PC-3 (cell line): ENCODE measurements at regions of chr3 and their contacts with region 1.

Region 1: DNA sequence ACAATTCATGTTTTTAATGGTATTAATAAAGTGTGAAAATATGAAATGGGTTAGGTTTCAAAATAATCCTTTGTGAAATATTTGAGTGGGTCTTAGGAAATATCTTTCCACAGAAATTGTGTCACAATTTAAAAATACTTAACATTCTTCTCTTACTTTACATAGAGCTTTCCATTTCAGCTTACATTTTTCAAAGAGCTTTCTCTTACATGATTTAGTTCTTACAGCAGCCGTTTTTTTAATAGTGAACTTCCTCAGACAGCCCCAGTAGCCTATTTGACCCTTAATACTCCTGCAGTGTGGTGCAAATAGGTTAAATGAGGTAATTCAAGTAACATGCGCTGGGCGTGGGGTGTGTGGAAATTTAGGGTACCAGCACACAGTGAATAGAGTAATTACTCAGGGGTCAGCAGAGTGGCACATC is 21.8 kb downstream of the P2RY12 start:
- DNase-seq: no peak
- ATAC-seq: no peak
- H3K4me3 ChIP-seq: no peak overlapping the region
- H3K27ac ChIP-seq: no peak overlapping the region
- H3K4me1 ChIP-seq: peaks cover 20% of the 10 kb centered on the region
- H3K27me3 ChIP-seq: no peaks in the 10 kb centered on the region
- CTCF ChIP-seq: no peak

Region 2: DNA sequence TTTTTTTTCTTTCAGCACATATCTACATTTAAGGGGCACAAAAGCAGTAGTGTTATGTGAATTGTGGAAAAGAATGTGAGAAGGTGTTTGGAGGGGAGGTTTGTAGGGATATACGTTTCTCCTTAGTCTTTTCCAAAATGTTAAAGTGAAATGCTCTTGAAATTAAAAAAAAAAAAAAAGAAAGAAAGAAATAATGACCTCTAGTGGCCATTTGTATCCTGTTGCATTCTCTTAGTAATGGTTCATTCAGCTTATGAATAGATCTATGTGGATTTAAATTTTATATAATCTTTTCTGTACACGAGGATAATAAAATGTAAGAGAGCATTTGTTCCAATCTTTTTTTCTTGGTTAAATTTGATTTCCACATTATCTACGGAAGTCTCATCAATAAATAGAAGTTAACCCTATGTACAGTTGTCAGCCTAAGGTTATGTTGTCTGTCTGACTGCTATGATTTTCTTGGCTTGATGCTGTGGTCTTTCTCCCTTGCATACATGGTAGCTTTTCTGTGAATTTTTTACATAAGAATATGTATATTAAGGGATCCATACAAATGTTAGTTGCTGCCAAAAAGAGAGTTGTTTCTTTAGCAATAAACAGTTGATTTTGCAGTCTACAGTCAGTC is 35.1 kb before region 1 on chr3:
- CTCF ChIA-PET with region 1: interaction called, 3 read pairs
- POLR2A ChIA-PET with region 1: interaction called, 3 read pairs
- intact Hi-C with region 1: loop called (anchors 5 kb)
- DNase-seq: peak; percentile 64
- ATAC-seq: peak; percentile 68
- H3K4me3 ChIP-seq: no peak overlapping the region
- H3K27ac ChIP-seq: no peak overlapping the region
- H3K4me1 ChIP-seq: peaks cover 18% of the 10 kb centered on the region
- H3K27me3 ChIP-seq: no peaks in the 10 kb centered on the region
- CTCF ChIP-seq: peak; percentile 79